ENCODE measurements at regions of chr22 and their contacts with region 1.

Region 1: DNA sequence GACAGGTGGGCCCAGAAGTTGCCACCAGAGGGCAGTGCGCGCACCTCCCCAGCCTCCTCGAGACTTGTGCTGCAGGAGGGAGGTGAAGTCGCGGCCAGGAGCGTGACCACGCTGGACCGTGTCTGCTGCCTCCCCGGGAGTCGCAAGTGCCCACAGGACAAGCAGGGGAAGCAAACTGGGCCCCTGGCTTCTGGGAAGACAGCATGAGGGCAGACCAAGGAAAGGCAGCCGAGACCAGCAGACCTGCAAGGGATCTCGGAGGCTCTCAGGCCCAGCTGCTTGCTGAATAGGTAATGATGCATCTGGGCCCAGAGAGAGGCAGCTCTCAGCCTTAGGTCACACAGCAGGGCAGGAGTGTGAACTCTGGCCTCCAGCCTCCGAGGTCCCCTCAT is 17.0 kb upstream of the IL2RB start:
- DNase-seq: peak; percentile 84 to 91
- ATAC-seq: peak; percentile 94 to 99
- H3K4me3 ChIP-seq: 0 out of 3 replicates have a peak overlapping the region, but pooled peaks have one; percentile 4
- H3K27ac ChIP-seq: peak overlapping the region; percentile 87
- H3K4me1 ChIP-seq: peaks cover 42% of the 10 kb centered on the region
- CTCF ChIP-seq: peak; percentile 80
- EP300 ChIP-seq: no peak
- POLR2A ChIP-seq: no peak; the same call in 1 of the 2 replicates
- RAD21 ChIP-seq: peak; percentile 77 to 85

Region 2: GRCh38 chr22:37186228-37186996 is 19.7 kb after region 1 on chr22:
- CTCF ChIA-PET with region 1: interaction called, 19 read pairs
- POLR2A ChIA-PET with region 1: interaction called, 3 read pairs
- DNase-seq: peak; percentile 78 to 94
- ATAC-seq: peak; percentile 57 to 82; a peak in 4 of 6 replicates
- H3K4me3 ChIP-seq: peak overlapping the region; percentile 60
- H3K27ac ChIP-seq: peak overlapping the region; percentile 99 to 100
- H3K4me1 ChIP-seq: peaks cover 69% of the 10 kb centered on the region
- CTCF ChIP-seq: no peak
- EP300 ChIP-seq: no peak
- POLR2A ChIP-seq: no peak
- RAD21 ChIP-seq: no peak

Region 3: DNA sequence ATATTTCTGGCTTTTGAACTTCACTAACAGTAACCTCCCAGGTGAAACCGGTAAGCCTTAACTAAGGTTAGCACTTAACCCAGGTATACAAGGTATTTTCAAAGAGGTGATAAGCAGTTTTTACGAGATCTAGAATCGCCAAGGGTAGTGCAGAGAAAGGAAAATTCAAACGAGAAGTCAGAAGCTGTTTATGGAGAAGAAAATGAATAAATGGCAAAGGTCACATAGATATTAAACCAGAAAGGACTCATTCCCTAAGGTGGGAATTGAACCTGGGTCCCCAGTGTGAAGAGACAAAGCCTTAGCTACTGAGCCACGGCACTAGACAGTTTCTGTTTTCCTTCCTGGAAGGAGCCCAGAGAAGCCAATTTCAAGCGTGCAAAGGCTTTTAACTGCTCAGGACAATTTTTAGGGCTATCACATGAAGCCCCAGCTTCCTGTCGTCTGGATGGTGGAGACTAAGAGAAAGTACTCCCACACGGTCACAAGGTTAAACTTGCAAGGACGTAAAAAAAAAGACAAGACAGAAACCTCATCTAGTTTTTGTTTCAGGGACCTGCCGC is 27.0 kb after region 1 on chr22:
- CTCF ChIA-PET with region 1: interaction called, 126 read pairs
- POLR2A ChIA-PET with region 1: no interaction called
- DNase-seq: peak in 1 of 2 experiments; percentile 83
- ATAC-seq: peak in 1 of 2 experiments; percentile 2; a peak in 1 of 6 replicates
- H3K4me3 ChIP-seq: no peak overlapping the region
- H3K27ac ChIP-seq: peak overlapping the region; percentile 99 to 100
- H3K4me1 ChIP-seq: peaks cover 91% of the 10 kb centered on the region
- CTCF ChIP-seq: no peak
- EP300 ChIP-seq: no peak
- POLR2A ChIP-seq: no peak
- RAD21 ChIP-seq: no peak

Measured in A549 (cell line).